HEK293 (cell line): ENCODE measurements at regions of chr2 and their contacts with region 1.

Region 1: DNA sequence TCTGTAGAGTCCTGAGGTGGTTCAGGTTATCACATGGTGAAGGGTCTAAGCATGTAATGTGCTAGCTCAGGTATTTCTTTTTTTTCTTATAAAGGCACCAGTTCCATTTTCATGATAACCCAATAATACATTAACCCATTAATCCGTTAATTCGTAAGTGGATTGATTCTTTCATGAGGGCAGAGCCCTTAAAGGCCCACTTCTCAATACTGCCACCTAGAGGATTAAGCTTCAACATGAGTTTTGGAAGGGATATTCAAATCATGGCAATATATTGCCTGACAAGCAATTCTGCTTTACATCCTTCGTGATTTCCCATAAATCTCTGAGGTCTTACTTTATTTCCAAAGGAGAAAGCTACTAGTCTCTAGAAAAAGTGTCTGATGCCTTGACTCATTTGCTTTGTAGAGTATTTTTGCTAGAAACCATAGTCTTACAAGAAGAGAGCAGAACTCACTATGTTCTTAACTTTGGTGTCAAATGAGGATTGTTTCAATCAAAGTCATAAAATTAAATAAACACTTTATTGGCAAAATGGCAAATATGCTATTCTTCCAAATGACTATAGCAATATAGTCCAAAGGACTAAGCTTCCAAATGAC is 271.3 kb downstream of the KCNS3 start:
- H3K4me3 ChIP-seq: no peak overlapping the region
- H3K27ac ChIP-seq: no peak overlapping the region
- H3K4me1 ChIP-seq: no peaks in the 10 kb centered on the region
- CTCF ChIP-seq: peak; percentile 17; the same call in 1 of the 2 replicates

Region 2: GRCh38 chr2:17851731-17852585 is 297.8 kb before region 1 on chr2:
- CTCF ChIA-PET with region 1: interaction called, 17 read pairs
- POLR2A ChIA-PET with region 1: no interaction called
- H3K4me3 ChIP-seq: no peak overlapping the region
- H3K27ac ChIP-seq: no peak overlapping the region
- H3K4me1 ChIP-seq: no peaks in the 10 kb centered on the region
- CTCF ChIP-seq: peak; percentile 71; the same call in 1 of the 2 replicates

Region 3: DNA sequence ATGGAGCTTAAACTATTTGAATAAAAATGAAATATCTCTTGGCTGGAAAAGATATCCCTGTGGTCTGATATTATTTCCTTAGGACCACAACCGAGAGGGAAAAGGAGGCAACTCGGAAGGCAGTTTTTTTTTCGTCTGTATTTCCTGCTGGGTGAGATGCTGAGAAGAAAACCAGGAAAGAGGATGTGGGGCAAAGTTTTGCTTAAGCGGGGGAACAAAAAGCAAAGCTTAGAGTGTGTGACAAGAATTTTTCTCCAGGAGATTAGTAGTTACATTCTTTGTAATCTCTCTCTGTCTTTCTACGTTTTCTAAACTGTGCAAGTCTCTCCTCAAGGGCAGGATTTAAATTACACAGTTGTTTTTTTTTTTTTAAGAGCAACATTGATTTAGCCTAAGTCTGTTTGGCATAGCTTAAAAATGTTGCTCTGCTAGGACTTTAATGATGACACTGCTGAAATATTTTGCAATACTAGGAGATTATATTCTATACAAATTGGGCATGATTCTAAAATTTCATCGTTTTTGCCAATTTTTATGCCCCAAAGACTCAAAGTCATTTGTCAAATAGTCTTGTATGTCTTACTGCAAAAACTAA is 12.8 kb before region 1 on chr2:
- CTCF ChIA-PET with region 1: interaction called, 47 read pairs
- POLR2A ChIA-PET with region 1: no interaction called
- H3K4me3 ChIP-seq: no peak overlapping the region
- H3K27ac ChIP-seq: no peak overlapping the region
- H3K4me1 ChIP-seq: peaks cover 5% of the 10 kb centered on the region; the same call in 1 of the 2 replicates
- CTCF ChIP-seq: no peak

Region 4: DNA sequence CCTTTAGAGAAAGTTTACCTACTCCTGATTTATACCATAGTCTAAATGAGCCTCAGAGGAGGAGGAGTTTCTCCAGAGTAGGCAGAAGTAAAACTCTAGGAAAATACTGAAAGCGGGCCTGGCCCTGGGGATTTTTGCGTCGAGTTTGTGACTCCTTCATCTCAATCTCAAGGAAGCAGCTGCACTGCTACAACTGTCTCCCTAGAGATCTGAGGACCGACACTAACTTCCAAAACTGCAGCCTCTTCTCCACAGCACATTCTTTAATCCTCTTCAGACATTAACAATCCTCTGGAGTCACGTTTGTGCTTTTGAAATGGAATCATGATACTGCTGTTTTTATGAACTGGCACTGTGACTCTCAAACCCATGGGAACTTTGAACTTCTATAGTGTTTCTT is 10.2 kb after region 1 on chr2:
- CTCF ChIA-PET with region 1: interaction called, 17 read pairs
- POLR2A ChIA-PET with region 1: no interaction called
- H3K4me3 ChIP-seq: no peak overlapping the region
- H3K27ac ChIP-seq: no peak overlapping the region
- H3K4me1 ChIP-seq: peaks cover 12% of the 10 kb centered on the region
- CTCF ChIP-seq: no peak

Region 5: DNA sequence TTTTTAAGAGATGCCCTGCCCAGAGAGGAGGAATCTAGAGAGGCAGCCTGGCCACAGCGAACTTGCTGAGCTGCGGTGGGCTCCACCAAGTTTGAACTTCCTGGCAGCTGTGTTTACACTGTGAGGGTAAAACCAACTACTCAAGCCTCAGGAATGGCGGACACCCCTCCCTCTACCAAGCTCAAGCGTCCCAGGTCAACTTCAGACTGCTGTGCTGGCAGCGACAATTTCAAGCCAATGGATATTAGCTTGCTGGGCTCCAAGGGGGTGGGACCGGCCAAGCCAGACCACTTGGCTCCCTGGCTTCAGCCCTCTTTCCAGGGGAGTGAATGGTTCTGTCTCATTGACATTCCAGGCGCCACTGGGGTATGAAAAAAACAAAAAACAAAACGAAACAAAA is 18.1 kb after region 1 on chr2:
- CTCF ChIA-PET with region 1: interaction called, 10 read pairs
- POLR2A ChIA-PET with region 1: no interaction called
- H3K4me3 ChIP-seq: no peak overlapping the region
- H3K27ac ChIP-seq: no peak overlapping the region
- H3K4me1 ChIP-seq: no peaks in the 10 kb centered on the region
- CTCF ChIP-seq: no peak

Region 6: GRCh38 chr2:18319987-18320386 is 170.2 kb after region 1 on chr2:
- CTCF ChIA-PET with region 1: no interaction called
- POLR2A ChIA-PET with region 1: no interaction called
- H3K4me3 ChIP-seq: no peak overlapping the region
- H3K27ac ChIP-seq: no peak overlapping the region
- H3K4me1 ChIP-seq: no peaks in the 10 kb centered on the region
- CTCF ChIP-seq: no peak

Region 7: DNA sequence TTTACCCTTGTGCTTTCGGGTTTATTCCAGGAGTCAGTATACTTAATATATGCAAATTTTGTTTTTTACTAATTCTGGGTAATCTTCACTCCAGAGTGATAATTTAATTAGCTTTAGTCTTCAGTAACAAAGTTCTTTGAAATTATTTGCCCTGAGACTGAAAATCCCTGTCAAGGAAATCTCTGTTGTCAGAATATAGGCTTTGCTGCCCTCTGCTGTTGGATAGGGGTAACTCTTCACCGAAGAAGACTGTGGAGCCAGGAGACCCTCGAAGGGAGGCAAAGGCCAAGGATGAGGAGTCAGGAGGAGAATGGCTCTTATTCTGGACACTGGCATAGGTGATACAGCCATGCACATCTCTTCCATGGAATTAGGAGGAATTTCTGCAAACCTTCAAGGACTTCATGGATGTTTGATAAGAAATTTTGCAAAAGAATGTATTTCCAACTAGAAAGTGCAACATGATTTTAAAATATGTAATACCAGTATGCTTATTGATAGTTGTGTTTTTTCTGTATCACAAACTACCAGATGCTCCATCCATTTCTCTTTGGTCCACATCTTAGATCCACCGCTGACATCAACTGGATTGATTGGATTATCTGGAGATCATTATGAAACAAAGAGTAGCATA is 228.4 kb after region 1 on chr2:
- CTCF ChIA-PET with region 1: interaction called, 11 read pairs
- POLR2A ChIA-PET with region 1: no interaction called
- H3K4me3 ChIP-seq: no peak overlapping the region
- H3K27ac ChIP-seq: no peak overlapping the region
- H3K4me1 ChIP-seq: 0 out of 2 replicates have a peak, but pooled peaks cover under 1% of the 10 kb centered on the region
- CTCF ChIP-seq: peak; percentile 53; the same call in 1 of the 2 replicates